Panc1 (cell line): ENCODE measurements at regions of chr17 and their contacts with region 1.

Region 1: DNA sequence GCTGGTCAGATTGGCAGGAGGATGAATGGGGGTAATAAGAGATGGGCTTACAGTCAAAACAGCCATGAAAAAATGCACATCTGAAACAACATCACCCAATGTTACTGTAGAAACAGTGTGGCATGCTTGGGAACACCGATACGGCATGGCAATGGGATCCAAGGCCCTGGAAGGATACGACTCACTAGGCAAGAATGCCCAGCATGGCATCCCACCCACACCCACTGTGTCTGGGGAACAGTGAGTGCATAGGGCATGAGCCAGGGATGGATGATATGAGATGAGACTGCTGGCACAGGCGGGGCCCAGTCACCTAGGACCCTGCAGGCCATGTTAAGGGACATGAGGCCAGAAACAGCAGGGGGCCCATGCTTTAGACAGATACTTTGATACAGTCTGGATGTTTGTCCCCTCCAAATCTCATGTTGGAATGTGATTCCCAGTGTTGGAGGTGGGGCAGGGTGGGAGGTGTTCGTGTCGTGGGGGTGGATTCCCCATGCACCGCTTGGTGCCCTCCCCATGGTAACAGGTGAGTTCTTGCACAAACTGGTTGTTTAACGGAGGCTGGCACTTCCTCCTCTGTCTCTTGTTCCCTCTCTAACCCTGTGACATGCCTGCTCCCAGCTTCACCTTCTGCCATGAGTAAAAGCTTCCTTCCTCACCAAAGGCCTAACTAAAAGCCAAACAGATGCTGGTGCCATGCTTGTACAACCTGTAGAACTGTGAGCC is 11.3 kb downstream of the TRIM25 start:
- DNase-seq: no peak
- ATAC-seq: peak; percentile 57; the same call in 1 of the 2 replicates
- H3K4me3 ChIP-seq: no peak overlapping the region
- H3K27ac ChIP-seq: no peak overlapping the region
- H3K4me1 ChIP-seq: no peaks in the 10 kb centered on the region
- H3K27me3 ChIP-seq: no peaks in the 10 kb centered on the region
- CTCF ChIP-seq: no peak

Region 2: GRCh38 chr17:56948491-56948890 is 46.0 kb after region 1 on chr17:
- CTCF ChIA-PET with region 1: no interaction called
- POLR2A ChIA-PET with region 1: interaction called, 14 read pairs
- in situ Hi-C with region 1: no loop called
- intact Hi-C with region 1: loop called (anchors 5 kb)
- DNase-seq: no peak
- ATAC-seq: no peak
- H3K4me3 ChIP-seq: no peak overlapping the region
- H3K27ac ChIP-seq: no peak overlapping the region
- H3K4me1 ChIP-seq: no peaks in the 10 kb centered on the region
- H3K27me3 ChIP-seq: no peaks in the 10 kb centered on the region
- CTCF ChIP-seq: no peak